KBM-7 (cell line): ENCODE measurements at regions of chr4 and their contacts with region 1.

Region 1: DNA sequence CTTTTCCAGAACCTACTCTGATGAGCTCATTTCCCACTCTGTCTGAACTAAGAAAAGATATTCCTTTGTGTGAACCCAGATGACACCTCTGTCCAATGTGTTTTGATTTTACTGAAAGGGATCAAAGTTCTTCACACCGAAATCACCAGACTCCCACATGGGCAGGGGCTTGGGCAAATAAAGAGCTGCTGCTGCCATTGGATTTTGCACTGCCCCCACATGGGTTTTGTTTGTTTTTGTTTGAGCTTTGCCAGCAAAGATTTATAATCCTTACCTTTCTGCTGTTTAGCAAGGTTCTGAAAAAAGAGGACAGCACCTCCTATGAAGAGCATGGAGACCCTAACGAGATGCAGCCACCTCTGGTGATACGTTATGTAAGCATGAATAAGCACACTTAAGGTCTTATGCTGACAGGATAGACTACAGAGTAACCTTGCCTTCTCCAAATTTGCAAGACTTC is 44.3 kb downstream of the HSD17B13 start:
- DNase-seq: no peak

Region 2: DNA sequence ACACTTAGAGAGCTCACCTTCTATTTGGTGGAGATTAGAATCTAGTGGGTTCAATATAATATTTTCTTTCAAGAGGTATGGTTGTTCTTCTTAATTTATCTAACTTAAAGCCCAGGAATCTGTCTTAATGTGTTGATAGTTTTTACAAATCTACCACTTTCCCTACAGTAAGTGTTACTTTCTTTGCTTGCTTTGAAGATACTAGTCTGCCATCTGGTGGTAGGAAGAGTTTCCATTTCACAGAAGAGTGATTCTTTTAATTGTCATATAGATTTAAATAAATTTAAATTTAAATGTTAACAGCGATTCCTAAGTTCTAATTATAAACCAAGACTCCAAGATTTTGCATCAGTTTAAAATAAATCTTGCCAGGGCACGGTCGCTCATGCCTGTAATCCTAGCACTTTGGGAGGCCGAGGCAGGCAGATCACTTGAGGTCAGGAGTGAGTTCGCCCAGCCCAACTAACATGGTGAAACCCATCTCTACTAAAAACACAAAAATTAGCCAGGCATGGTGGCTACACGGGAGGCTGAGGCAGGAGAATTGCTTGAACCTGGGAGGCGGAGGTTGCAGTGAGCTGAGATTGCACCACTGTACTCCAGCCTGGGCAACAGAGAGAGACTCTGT is 187.5 kb after region 1 on chr4:
- in situ Hi-C with region 1: loop called (anchors 25 kb)
- DNase-seq: peak; percentile 59